ENCODE measurements at regions of chrX and their contacts with region 1.

Region 1: GRCh38 chrX:41705680-41706374 is 17.1 kb downstream of the GPR34 start:
- DNase-seq: peak; percentile 48
- ATAC-seq: peak; percentile 76
- H3K4me3 ChIP-seq: peak overlapping the region in 2 of 5 experiments; percentile 8 to 11
- H3K4me3 Mint-ChIP-seq: peak overlapping the region; percentile 85
- H3K27ac ChIP-seq: peak overlapping the region; percentile 44 to 55
- H3K27ac Mint-ChIP-seq: peak overlapping the region; percentile 97
- H3K4me1 ChIP-seq: peaks cover 43 to 48% of the 10 kb centered on the region in 2 donors
- H3K4me1 Mint-ChIP-seq: peaks cover 52% of the 10 kb centered on the region
- H3K27me3 ChIP-seq: no peaks in the 10 kb centered on the region
- H3K27me3 Mint-ChIP-seq: no peaks in the 10 kb centered on the region
- CTCF ChIP-seq: no peak

Region 2: DNA sequence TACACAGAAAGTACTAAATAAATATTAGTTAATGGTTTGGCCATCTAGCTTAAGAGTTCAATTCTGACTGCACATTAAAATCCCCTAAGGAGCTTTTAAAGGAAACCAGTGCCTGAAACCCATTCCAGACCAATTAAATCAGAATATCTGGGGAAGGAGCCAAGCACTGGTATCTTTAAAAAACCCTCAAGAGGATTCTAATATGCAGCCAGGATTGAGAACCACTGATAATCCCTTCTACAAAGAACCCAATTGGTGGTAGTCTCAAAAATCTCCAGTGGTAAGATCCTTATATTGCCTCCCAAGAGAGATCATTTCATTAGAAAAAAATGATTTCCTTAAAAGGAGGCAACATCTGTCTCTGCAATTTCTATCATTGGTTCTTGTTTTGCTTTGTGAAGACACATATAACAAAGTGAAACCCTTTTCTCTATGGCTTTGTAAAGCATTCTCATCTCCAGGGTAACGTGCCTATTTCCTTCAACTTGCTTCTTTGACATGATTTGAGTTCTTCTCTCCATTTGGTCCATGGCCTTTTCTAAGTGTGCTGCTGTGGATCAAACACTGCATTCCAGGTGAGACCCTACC is 13.6 kb before region 1 on chrX:
- CTCF ChIA-PET with region 1: no interaction called
- POLR2A ChIA-PET with region 1: no interaction called
- intact Hi-C with region 1: no loop called
- DNase-seq: no peak
- ATAC-seq: no peak
- H3K4me3 ChIP-seq: no peak overlapping the region
- H3K4me3 Mint-ChIP-seq: peak overlapping the region; percentile 50
- H3K27ac ChIP-seq: no peak overlapping the region
- H3K27ac Mint-ChIP-seq: peak overlapping the region; percentile 70
- H3K4me1 ChIP-seq: peaks cover 18 to 25% of the 10 kb centered on the region in 2 donors
- H3K4me1 Mint-ChIP-seq: peaks cover 35% of the 10 kb centered on the region
- H3K27me3 ChIP-seq: no peaks in the 10 kb centered on the region
- H3K27me3 Mint-ChIP-seq: no peaks in the 10 kb centered on the region
- CTCF ChIP-seq: no peak

Region 3: DNA sequence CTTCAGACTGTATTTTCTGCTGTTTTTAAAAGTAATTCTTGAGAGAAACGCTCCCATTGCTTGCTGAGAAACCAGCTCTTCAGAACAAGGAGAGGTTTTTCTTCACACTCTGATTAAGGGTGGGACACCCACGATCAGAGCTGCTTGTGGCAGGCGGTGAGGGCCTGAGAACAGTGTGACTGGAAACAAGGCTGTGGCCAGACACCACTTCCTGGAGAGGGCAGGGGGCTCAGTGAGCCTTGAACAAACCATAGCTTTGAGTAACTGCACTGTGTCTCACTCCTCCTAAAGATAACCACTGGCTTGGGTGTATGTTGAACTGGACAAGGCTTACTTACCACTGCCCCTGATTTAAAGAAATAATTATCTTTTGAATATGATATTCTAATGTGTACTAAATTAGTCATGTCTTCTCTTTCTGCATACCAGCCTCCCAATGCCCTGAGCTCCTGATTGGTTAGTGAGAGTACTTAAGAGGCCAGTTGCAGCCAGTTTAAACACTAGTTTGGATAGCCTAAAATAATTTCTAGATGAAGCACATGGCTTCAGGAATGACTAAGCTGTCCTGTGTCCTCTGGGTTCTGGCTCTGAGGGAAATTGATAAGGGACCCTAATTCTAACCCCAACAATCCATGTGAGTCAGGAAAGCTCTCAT is 14.4 kb after region 1 on chrX:
- CTCF ChIA-PET with region 1: interaction called, 20 read pairs
- POLR2A ChIA-PET with region 1: interaction called, 3 read pairs
- intact Hi-C with region 1: loop called (anchors 2 kb)
- DNase-seq: peak; percentile 44
- ATAC-seq: peak; percentile 85
- H3K4me3 ChIP-seq: no peak overlapping the region
- H3K4me3 Mint-ChIP-seq: peak overlapping the region; percentile 4
- H3K27ac ChIP-seq: no peak overlapping the region
- H3K27ac Mint-ChIP-seq: peak overlapping the region; percentile 56
- H3K4me1 ChIP-seq: peaks cover 58 to 80% of the 10 kb centered on the region in 2 donors
- H3K4me1 Mint-ChIP-seq: peaks cover 72% of the 10 kb centered on the region
- H3K27me3 ChIP-seq: no peaks in the 10 kb centered on the region
- H3K27me3 Mint-ChIP-seq: no peaks in the 10 kb centered on the region
- CTCF ChIP-seq: no peak

Region 4: DNA sequence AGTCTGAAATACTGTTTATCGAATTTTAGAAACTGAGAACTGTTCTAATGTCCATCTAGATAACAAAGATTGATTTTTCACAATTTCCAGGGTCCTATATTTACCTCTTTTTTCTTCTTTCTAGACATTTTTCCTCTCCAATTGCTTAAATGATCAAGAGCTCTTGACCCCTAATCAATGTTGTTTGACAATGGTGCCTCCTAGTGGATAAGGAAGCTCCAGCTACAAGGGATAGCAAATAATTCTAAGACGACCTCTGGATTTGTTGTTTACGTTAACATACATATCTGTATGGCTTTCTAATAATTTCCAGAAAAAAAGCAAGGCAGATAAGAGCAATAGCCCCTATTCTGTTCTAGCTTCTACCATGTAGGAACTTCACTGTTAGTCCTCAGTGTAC is 54.0 kb after region 1 on chrX:
- CTCF ChIA-PET with region 1: interaction called, 15 read pairs
- POLR2A ChIA-PET with region 1: no interaction called
- intact Hi-C with region 1: no loop called
- DNase-seq: peak; percentile 55
- ATAC-seq: no peak
- H3K4me3 ChIP-seq: no peak overlapping the region
- H3K4me3 Mint-ChIP-seq: no peak overlapping the region
- H3K27ac ChIP-seq: no peak overlapping the region
- H3K27ac Mint-ChIP-seq: no peak overlapping the region
- H3K4me1 ChIP-seq: no peaks in the 10 kb centered on the region
- H3K4me1 Mint-ChIP-seq: peaks cover 3% of the 10 kb centered on the region
- H3K27me3 ChIP-seq: no peaks in the 10 kb centered on the region
- H3K27me3 Mint-ChIP-seq: no peaks in the 10 kb centered on the region
- CTCF ChIP-seq: peak; percentile 64